Mammary epithelial cell (primary cell): ENCODE measurements at regions of chr5 and their contacts with region 1.

Region 1: GRCh38 chr5:111997711-111998110 is 240.7 kb upstream of the NREP start:
- DNase-seq: peak; percentile 99
- H3K4me3 ChIP-seq: no peak overlapping the region
- H3K27ac ChIP-seq: peak overlapping the region; percentile 2
- H3K4me1 ChIP-seq: peaks cover 23% of the 10 kb centered on the region
- H3K27me3 ChIP-seq: no peaks in the 10 kb centered on the region
- CTCF ChIP-seq: no peak

Region 2: DNA sequence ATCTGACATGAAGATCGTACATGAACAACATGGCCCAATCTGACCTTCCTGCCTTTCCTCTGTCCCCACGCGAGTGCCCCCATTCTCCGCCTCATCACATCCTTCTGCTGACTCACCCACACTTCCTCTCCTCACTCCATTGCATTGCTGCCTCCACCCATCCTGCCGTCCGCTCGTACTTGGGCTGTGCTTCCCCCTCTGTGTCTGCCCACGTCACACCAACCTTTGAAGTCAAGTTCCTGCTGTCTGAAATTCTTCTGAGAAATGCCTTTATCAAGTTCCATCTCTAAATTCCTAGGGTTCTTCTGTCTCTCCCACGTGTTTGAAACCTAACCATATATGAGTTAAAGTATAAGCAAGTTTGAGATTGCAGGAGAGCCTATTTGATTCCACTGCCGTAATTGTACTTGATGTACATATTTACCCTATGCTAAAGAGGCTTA is 467.4 kb before region 1 on chr5:
- CTCF ChIA-PET with region 1: interaction called, 24 read pairs
- dilution Hi-C with region 1: no loop called
- in situ Hi-C with region 1: no loop called
- intact Hi-C with region 1: no loop called
- DNase-seq: peak; percentile 40
- H3K4me3 ChIP-seq: no peak overlapping the region
- H3K27ac ChIP-seq: no peak overlapping the region
- H3K4me1 ChIP-seq: peaks cover 8% of the 10 kb centered on the region
- H3K27me3 ChIP-seq: no peaks in the 10 kb centered on the region
- CTCF ChIP-seq: no peak

Region 3: DNA sequence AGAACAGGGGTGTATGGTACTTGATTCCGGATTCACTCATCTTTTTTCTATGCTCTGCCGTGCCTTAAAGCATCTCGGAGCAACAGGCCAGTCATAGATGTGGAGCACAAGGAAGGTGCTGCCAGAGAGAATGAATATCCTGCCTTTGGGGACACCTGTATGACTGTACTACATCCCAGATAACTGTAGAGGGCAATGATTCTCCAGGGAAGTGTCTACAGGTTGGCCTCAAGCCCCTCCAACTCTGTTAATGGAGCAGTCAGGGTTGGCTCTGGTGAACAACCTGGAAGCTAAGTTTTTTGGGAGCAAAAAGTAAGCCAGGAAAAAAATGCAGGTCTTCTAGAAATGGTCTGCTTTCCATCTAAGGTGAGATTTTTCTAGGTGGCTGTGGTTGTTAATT is 311.7 kb before region 1 on chr5:
- CTCF ChIA-PET with region 1: no interaction called
- dilution Hi-C with region 1: no loop called
- in situ Hi-C with region 1: no loop called
- intact Hi-C with region 1: no loop called
- DNase-seq: no peak
- H3K4me3 ChIP-seq: no peak overlapping the region
- H3K27ac ChIP-seq: no peak overlapping the region
- H3K4me1 ChIP-seq: peaks cover 9% of the 10 kb centered on the region
- H3K27me3 ChIP-seq: no peaks in the 10 kb centered on the region
- CTCF ChIP-seq: peak; percentile 32 to 34

Region 4: DNA sequence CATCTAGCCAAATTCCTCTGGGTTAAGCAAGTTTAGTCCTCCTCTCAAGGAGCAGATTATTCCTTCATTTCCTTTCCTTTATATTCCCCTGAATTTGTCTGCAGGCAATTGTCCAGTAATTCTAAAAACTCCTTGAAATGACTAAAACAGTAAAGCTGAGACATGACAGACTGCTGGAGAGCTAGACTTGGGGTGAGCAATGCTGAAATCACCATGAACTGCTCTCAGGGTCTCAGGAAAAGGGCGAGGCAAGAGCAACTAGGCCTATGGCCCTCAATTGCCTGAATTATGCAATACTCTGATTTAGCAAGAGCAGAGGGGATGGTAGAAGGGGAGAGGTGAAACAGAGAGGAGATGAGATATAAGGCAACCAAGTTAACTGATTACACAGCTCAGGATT is 67.8 kb before region 1 on chr5:
- CTCF ChIA-PET with region 1: no interaction called
- dilution Hi-C with region 1: no loop called
- in situ Hi-C with region 1: no loop called
- intact Hi-C with region 1: loop called (anchors 5 kb)
- DNase-seq: peak; percentile 93
- H3K4me3 ChIP-seq: no peak overlapping the region
- H3K27ac ChIP-seq: peak overlapping the region; percentile 52
- H3K4me1 ChIP-seq: peaks cover 23% of the 10 kb centered on the region
- H3K27me3 ChIP-seq: no peaks in the 10 kb centered on the region
- CTCF ChIP-seq: no peak